ENCODE measurements at regions of chr11 and their contacts with region 1.

Region 1: GRCh38 chr11:5065027-5065426 is 4.3 kb upstream of the OR52E1 start:
- DNase-seq: no peak
- ATAC-seq: no peak
- H3K4me3 ChIP-seq: no peak overlapping the region
- H3K27ac ChIP-seq: no peak overlapping the region
- H3K4me1 ChIP-seq: no peaks in the 10 kb centered on the region
- H3K27me3 ChIP-seq: no peaks in the 10 kb centered on the region
- CTCF ChIP-seq: no peak

Region 2: DNA sequence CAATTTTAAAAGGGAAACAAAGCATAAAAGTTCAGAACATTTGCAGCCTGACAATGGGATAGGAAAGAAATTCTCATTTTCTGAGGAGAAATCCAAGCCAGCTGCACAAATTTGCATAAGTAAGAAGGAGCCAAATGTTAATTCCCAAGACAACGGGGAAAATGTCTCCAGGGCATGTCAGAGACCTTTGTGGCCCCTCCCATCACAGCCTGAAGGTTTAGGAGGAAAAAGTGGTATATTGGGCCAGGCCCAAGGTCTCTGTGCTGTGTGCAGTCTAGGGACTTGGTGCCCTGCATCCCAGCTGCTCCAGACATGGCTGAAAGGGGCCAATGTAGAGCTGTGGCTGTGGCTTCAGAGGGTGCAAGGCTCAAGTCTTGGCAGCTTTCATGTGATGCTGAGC is 282.5 kb before region 1 on chr11:
- CTCF ChIA-PET with region 1: no interaction called
- POLR2A ChIA-PET with region 1: no interaction called
- in situ Hi-C with region 1: no loop called
- intact Hi-C with region 1: no loop called
- DNase-seq: no peak
- ATAC-seq: no peak
- H3K4me3 ChIP-seq: no peak overlapping the region
- H3K27ac ChIP-seq: no peak overlapping the region
- H3K4me1 ChIP-seq: no peaks in the 10 kb centered on the region
- H3K27me3 ChIP-seq: no peaks in the 10 kb centered on the region
- CTCF ChIP-seq: no peak

Region 3: GRCh38 chr11:5102246-5102645 is 37.2 kb after region 1 on chr11:
- CTCF ChIA-PET with region 1: no interaction called
- POLR2A ChIA-PET with region 1: no interaction called
- in situ Hi-C with region 1: loop called (anchors 5 kb)
- intact Hi-C with region 1: no loop called
- DNase-seq: no peak
- ATAC-seq: no peak
- H3K4me3 ChIP-seq: no peak overlapping the region
- H3K27ac ChIP-seq: no peak overlapping the region
- H3K4me1 ChIP-seq: no peaks in the 10 kb centered on the region
- H3K27me3 ChIP-seq: peaks cover 9% of the 10 kb centered on the region
- CTCF ChIP-seq: no peak

Region 4: DNA sequence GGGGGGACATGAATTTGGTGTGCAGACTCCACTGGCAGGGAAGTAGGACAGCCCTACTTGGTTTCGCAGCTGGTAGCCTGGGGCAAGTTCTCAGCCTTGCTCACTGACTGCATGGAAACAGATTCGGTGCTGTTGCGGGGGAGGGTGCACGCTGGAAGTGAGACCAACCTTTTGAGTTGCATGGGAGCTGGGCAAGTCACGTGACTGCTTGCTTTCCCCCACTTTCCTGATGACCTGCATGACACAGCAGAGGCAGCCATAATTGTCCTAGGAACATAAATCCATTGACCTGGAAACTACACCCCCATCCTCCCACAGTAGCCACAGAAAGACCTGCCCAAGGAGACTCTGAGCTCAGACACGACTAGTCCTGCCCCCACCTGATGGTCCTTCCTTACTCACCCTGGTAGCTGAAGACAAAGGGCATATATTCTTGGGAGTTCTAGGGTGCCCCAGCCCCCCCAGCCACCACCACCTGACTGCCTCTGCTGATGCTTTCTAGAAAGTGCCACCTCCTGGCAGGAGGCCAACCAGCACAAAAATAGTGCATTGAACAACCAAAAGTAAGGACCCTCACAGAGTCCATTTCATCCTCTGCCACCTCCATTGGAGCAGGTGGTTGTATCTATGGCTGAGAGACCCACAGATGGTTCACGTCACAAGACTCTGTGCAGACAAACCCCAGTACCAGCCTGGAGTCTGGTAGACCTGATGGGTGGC is 193.7 kb after region 1 on chr11:
- CTCF ChIA-PET with region 1: no interaction called
- POLR2A ChIA-PET with region 1: no interaction called
- in situ Hi-C with region 1: no loop called
- intact Hi-C with region 1: no loop called
- DNase-seq: no peak
- ATAC-seq: no peak
- H3K4me3 ChIP-seq: no peak overlapping the region
- H3K27ac ChIP-seq: no peak overlapping the region
- H3K4me1 ChIP-seq: no peaks in the 10 kb centered on the region
- H3K27me3 ChIP-seq: no peaks in the 10 kb centered on the region
- CTCF ChIP-seq: no peak

Measured in Panc1 (cell line).